PC-3 (cell line): ENCODE measurements at regions of chr14 and their contacts with region 1.

Region 1: GRCh38 chr14:42490536-42490935 is 883.9 kb downstream of the LRFN5 start:
- DNase-seq: peak; percentile 48
- ATAC-seq: peak; percentile 62
- H3K4me3 ChIP-seq: no peak overlapping the region
- H3K27ac ChIP-seq: no peak overlapping the region
- H3K4me1 ChIP-seq: peaks cover 9% of the 10 kb centered on the region; the same call in 1 of the 2 replicates
- H3K27me3 ChIP-seq: no peaks in the 10 kb centered on the region
- CTCF ChIP-seq: no peak

Region 2: GRCh38 chr14:42455544-42455943 is 35.0 kb before region 1 on chr14:
- CTCF ChIA-PET with region 1: no interaction called
- POLR2A ChIA-PET with region 1: no interaction called
- intact Hi-C with region 1: no loop called
- DNase-seq: no peak
- ATAC-seq: no peak
- H3K4me3 ChIP-seq: no peak overlapping the region
- H3K27ac ChIP-seq: no peak overlapping the region
- H3K4me1 ChIP-seq: no peaks in the 10 kb centered on the region
- H3K27me3 ChIP-seq: no peaks in the 10 kb centered on the region
- CTCF ChIP-seq: no peak

Region 3: GRCh38 chr14:42469637-42470426 is 20.7 kb before region 1 on chr14:
- CTCF ChIA-PET with region 1: no interaction called
- POLR2A ChIA-PET with region 1: interaction called, 4 read pairs
- intact Hi-C with region 1: loop called (anchors 1 kb)
- DNase-seq: peak; percentile 45
- ATAC-seq: peak; percentile 72
- H3K4me3 ChIP-seq: no peak overlapping the region
- H3K27ac ChIP-seq: no peak overlapping the region
- H3K4me1 ChIP-seq: no peaks in the 10 kb centered on the region
- H3K27me3 ChIP-seq: no peaks in the 10 kb centered on the region
- CTCF ChIP-seq: no peak

Region 4: GRCh38 chr14:42517806-42518500 is 27.4 kb after region 1 on chr14:
- CTCF ChIA-PET with region 1: no interaction called
- POLR2A ChIA-PET with region 1: interaction called, 13 read pairs
- intact Hi-C with region 1: no loop called
- DNase-seq: no peak
- ATAC-seq: no peak
- H3K4me3 ChIP-seq: no peak overlapping the region
- H3K27ac ChIP-seq: no peak overlapping the region
- H3K4me1 ChIP-seq: no peaks in the 10 kb centered on the region
- H3K27me3 ChIP-seq: no peaks in the 10 kb centered on the region
- CTCF ChIP-seq: no peak

Region 5: GRCh38 chr14:43697003-43697402 is 1206.5 kb after region 1 on chr14:
- CTCF ChIA-PET with region 1: no interaction called
- POLR2A ChIA-PET with region 1: interaction called, 10 read pairs
- intact Hi-C with region 1: no loop called
- DNase-seq: no peak
- ATAC-seq: no peak
- H3K4me3 ChIP-seq: no peak overlapping the region
- H3K27ac ChIP-seq: no peak overlapping the region
- H3K4me1 ChIP-seq: no peaks in the 10 kb centered on the region
- H3K27me3 ChIP-seq: no peaks in the 10 kb centered on the region
- CTCF ChIP-seq: peak; percentile 43